Endothelial cell of umbilical vein (primary cell): ENCODE measurements at regions of chr6 and their contacts with region 1.

Region 1: GRCh38 chr6:30730601-30731435 is 10.7 kb downstream of the TUBB start:
- DNase-seq: peak; percentile 83
- H3K4me3 ChIP-seq: no peak overlapping the region
- H3K27ac ChIP-seq: no peak overlapping the region
- H3K4me1 ChIP-seq: peaks cover 2% of the 10 kb centered on the region
- H3K27me3 ChIP-seq: no peaks in the 10 kb centered on the region
- CTCF ChIP-seq: peak; percentile 75 to 85
- POLR2A ChIP-seq: no peak

Region 2: DNA sequence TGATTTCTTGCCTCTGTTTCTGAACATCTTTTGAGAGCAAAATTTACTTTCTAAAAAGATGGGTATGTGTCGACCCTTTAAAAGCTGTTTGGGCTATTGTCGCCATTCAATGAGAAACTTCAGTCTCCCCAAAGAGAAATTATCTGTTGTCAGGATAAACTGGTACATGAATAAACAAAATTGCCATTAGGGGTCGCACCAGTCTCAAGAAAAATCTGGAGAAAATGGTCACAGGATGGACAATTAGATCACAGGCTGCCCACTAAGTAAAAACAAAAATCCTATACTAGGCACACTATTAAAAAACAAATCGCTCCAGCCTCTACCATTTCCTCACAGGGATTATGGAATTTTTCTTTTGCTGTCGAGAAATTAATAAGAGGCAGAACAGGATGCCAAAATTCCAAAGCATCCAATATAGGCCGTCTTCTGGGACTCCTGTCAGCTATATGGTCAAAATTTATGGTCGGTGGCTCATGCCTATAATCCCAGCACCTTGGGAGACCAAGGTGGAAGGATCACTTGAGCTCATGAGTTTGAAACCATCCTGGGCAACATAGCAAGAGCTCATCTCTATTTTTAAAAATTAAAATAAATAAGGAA is 247.0 kb before region 1 on chr6:
- CTCF ChIA-PET with region 1: interaction called, 18 read pairs
- POLR2A ChIA-PET with region 1: no interaction called
- dilution Hi-C with region 1: no loop called
- intact Hi-C with region 1: no loop called
- DNase-seq: peak; percentile 84
- H3K4me3 ChIP-seq: no peak overlapping the region
- H3K27ac ChIP-seq: no peak overlapping the region
- H3K4me1 ChIP-seq: peaks cover 11% of the 10 kb centered on the region
- H3K27me3 ChIP-seq: peaks cover 29 to 32% of the 10 kb centered on the region in 2 experiments
- CTCF ChIP-seq: peak; percentile 36 to 40
- POLR2A ChIP-seq: no peak

Region 3: GRCh38 chr6:30616811-30617564 is 113.8 kb before region 1 on chr6 and contains the start of gene PPP1R10:
- CTCF ChIA-PET with region 1: interaction called, 17 read pairs
- POLR2A ChIA-PET with region 1: interaction called, 3 read pairs
- dilution Hi-C with region 1: no loop called
- intact Hi-C with region 1: no loop called
- DNase-seq: peak; percentile 100
- H3K4me3 ChIP-seq: peak within 1 kb of the TSS; percentile 51 to 84 (median 73)
- H3K27ac ChIP-seq: peak within 1 kb of the TSS; percentile 96
- H3K4me1 ChIP-seq: peaks cover 21% of the 10 kb centered on the region
- H3K27me3 ChIP-seq: no peaks in the 10 kb centered on the region
- CTCF ChIP-seq: no peak
- POLR2A ChIP-seq: peak; percentile 100
- total RNA-seq, gene PPP1R10: 75.1 and 88.3 TPM in 2 replicates

Region 4: DNA sequence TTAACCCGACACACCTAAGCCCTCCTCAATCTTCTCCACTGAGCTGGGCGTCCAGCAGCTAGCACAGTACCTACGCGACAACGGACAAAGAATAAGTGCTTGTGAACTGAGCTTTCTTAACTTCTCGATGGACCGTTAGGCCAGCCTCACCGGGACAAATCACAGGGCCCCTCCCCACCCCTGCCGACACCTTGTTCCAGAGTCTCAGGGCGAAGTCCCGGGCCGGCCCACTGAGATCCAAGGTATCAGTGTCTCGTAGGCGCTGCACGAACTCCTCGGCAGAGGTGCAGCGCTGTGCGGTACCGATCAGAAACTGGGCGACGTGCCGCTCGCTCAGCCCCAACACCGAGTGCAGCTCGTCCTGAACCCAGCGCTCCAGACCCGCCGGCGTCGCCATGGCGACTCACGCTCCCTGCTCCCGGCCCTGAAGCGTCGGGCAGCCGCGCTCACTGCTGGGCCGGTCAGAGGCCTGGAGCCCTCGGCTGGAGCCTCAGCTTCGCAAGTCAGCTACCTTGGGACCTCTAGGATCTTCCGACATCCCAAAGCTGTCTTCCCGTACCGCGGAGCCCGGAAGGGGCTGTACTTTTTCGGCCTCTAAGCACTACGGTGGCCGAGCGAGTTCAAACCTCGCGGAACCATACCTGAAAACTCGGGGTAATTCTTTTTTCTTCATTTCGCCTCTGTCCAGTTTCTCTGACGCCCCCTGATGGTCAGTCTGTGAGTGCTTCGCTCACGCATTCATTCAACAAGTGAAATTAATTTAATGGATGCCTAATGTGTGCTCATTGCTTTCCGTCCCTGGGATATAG is 58.2 kb before region 1 on chr6 and contains the start of gene DHX16:
- CTCF ChIA-PET with region 1: interaction called, 184 read pairs
- POLR2A ChIA-PET with region 1: no interaction called
- dilution Hi-C with region 1: no loop called
- intact Hi-C with region 1: no loop called
- DNase-seq: peak; percentile 97
- H3K4me3 ChIP-seq: peak within 1 kb of the TSS; percentile 38 to 82 (median 73)
- H3K27ac ChIP-seq: peak within 1 kb of the TSS; percentile 11
- H3K4me1 ChIP-seq: peaks cover 6% of the 10 kb centered on the region
- H3K27me3 ChIP-seq: no peaks in the 10 kb centered on the region
- CTCF ChIP-seq: peak; percentile 84 to 93
- POLR2A ChIP-seq: peak; percentile 85
- total RNA-seq, gene DHX16: 36.3 and 38.2 TPM in 2 replicates

Region 5: DNA sequence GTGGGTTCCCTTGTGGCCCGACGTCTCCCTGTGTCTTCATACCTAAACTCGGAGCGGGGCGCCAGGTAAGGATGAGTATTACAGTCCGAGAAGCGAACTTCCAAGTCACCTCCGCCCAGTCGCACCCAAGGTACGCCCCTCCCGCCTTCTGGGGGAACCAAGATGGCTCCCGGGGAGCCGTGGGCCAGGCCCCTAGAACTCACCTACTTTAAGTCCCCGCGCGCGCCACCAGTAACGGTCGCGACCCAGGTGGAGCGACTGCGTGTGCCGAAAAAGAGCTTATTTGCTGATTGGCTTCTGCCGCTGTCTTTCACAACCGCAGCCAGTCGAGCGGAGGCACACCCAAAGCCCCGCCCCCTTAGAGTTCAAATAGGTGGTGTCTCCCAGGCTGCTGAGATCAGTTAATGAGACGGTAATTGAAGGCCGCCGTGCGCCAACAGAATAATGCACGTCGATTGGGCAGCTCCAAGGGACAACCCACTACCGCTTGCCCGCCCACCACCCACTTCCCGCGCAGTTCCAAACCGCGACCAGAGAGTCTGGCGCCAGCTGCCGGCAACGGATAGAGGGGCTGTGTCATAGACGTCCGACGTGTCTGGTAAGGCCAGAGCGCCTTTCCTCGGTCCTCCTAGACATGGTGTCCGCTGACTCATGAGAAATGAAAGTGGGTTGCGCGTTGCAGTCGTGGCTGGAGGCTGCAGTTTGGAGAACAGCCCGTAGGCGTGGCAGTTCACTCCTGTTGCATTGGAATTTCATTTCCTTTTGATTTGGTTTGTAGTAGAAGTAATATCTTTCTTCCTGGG is 13.6 kb before region 1 on chr6 and contains the start of gene MDC1:
- CTCF ChIA-PET with region 1: interaction called, 40 read pairs
- POLR2A ChIA-PET with region 1: interaction called, 4 read pairs
- dilution Hi-C with region 1: no loop called
- intact Hi-C with region 1: no loop called
- DNase-seq: peak; percentile 100
- H3K4me3 ChIP-seq: peak within 1 kb of the TSS; percentile 7 to 80 (median 72)
- H3K27ac ChIP-seq: peak within 1 kb of the TSS; percentile 82
- H3K4me1 ChIP-seq: peaks cover 23% of the 10 kb centered on the region
- H3K27me3 ChIP-seq: no peaks in the 10 kb centered on the region
- CTCF ChIP-seq: peak in 1 of 2 donors; percentile 34
- POLR2A ChIP-seq: peak; percentile 82
- total RNA-seq, gene MDC1: 42.3 and 43.6 TPM in 2 replicates

Region 6: DNA sequence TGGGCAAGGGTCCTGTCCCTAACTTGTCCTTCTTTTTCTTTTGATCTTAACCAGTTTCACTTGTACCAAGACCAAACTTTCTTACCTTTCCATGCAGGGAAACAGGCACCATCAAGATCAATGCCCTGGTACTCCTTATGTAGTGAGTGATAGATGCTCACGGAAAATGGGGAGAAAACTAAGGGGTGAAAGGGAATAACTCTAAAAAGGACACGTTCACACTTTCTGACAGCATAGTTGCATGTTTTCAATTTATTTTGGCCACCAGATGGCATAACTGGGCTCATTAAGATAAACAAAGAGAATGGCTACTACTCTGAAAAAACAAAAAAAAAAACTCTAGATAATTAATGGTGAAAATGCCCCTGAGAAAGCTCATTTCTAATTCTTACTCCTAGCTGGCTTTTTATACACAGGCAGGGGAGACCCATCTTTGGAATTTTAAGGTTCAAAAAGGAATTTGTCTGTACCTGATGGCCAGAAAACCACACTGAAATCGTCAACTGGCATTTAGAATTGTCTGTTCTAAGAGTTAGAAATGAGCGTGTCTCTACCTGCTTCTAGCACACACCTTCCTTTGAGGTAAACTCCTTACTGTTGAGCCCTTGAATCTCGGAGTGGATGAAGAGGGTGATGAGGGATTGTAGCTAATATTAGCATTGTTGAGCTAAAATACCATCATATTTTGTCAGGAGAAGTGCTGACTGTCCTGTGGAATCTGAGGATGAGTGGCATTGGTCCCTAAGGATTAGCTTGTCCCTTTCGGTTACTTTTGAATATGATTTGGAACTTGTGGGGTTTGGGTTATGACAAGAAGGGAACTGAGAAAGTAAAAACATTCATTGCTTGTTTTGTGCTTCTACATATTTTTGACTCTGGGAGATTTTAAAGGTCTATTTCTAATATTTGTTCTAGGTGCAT is 91.3 kb after region 1 on chr6:
- CTCF ChIA-PET with region 1: interaction called, 29 read pairs
- POLR2A ChIA-PET with region 1: interaction called, 4 read pairs
- dilution Hi-C with region 1: no loop called
- intact Hi-C with region 1: no loop called
- DNase-seq: peak; percentile 75
- H3K4me3 ChIP-seq: no peak overlapping the region
- H3K27ac ChIP-seq: peak overlapping the region; percentile 21
- H3K4me1 ChIP-seq: peaks cover 36% of the 10 kb centered on the region
- H3K27me3 ChIP-seq: no peaks in the 10 kb centered on the region
- CTCF ChIP-seq: peak; percentile 49 to 52
- POLR2A ChIP-seq: no peak

Region 7: GRCh38 chr6:30914076-30914853 is 183.4 kb after region 1 on chr6 and contains the start of gene VARS2:
- CTCF ChIA-PET with region 1: interaction called, 11 read pairs
- POLR2A ChIA-PET with region 1: no interaction called
- dilution Hi-C with region 1: no loop called
- intact Hi-C with region 1: no loop called
- DNase-seq: peak; percentile 95
- H3K4me3 ChIP-seq: peak within 1 kb of the TSS; percentile 37 to 54 (median 44)
- H3K27ac ChIP-seq: peak within 1 kb of the TSS; percentile 67
- H3K4me1 ChIP-seq: peaks cover 25% of the 10 kb centered on the region
- H3K27me3 ChIP-seq: no peaks in the 10 kb centered on the region
- CTCF ChIP-seq: peak in 1 of 2 donors; percentile 41
- POLR2A ChIP-seq: peak; percentile 91
- total RNA-seq, gene VARS2: 32.5 and 34.3 TPM in 2 replicates